Common myeloid progenitor, CD34-positive (primary cell): ENCODE measurements at regions of chr10 and their contacts with region 1.

Region 1: GRCh38 chr10:69515699-69516259 is 57.4 kb downstream of the NEUROG3 start:
- DNase-seq: peak; percentile 70 to 83 (median 77)
- H3K4me3 ChIP-seq: no peak overlapping the region
- H3K27ac ChIP-seq: no peak overlapping the region
- H3K4me1 ChIP-seq: no peaks in the 10 kb centered on the region
- H3K27me3 ChIP-seq: peaks cover 0 to 7% (median 0%) of the 10 kb centered on the region in 5 experiments

Region 2: DNA sequence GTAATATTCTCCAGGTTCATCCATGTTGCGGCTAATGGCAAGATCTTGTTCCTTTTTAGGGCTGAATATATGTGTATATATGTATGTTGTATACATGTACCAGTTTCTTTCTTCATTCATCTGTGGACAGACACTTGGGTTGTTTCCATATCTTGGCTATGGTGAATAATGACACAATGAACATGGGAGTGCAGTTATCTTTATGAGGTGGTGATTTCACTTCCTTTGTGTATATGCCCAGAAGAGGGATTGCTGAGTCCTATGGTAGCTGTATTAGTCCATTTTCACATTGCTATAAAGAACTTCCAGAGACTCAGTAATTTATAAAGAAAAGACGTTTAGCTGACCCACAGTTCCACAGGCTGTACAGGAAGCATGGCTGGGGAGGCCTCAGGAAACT is 81.6 kb before region 1 on chr10:
- CTCF ChIA-PET with region 1: interaction called, 15 read pairs
- POLR2A ChIA-PET with region 1: no interaction called
- DNase-seq: no peak
- H3K4me3 ChIP-seq: no peak overlapping the region
- H3K27ac ChIP-seq: no peak overlapping the region
- H3K4me1 ChIP-seq: peaks cover 0 to 8% (median 0%) of the 10 kb centered on the region in 4 experiments
- H3K27me3 ChIP-seq: no peaks in the 10 kb centered on the region

Region 3: DNA sequence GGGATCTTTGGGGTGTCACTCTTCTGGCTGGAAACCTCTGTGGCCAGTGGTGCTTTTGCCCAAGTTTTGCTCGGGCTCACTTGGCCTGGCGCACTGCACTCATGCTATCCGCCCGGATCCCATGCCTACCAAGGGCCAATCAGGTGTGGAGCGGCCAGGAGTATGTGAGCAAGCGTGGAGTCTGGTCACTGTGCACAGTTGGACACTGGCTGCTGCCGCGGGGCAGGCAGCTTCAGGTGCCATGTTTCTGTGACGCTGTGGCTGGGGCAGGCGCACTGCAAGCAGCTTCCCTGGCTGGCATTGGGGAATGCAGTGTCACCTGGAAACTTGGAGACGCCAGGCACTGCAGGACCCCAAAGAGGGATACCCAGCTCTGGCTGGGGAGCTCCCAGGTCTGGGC is 12.2 kb after region 1 on chr10:
- CTCF ChIA-PET with region 1: interaction called, 22 read pairs
- POLR2A ChIA-PET with region 1: no interaction called
- DNase-seq: no peak
- H3K4me3 ChIP-seq: no peak overlapping the region
- H3K27ac ChIP-seq: no peak overlapping the region
- H3K4me1 ChIP-seq: no peaks in the 10 kb centered on the region
- H3K27me3 ChIP-seq: peaks cover 0 to 3% (median 0%) of the 10 kb centered on the region in 5 experiments

Region 4: DNA sequence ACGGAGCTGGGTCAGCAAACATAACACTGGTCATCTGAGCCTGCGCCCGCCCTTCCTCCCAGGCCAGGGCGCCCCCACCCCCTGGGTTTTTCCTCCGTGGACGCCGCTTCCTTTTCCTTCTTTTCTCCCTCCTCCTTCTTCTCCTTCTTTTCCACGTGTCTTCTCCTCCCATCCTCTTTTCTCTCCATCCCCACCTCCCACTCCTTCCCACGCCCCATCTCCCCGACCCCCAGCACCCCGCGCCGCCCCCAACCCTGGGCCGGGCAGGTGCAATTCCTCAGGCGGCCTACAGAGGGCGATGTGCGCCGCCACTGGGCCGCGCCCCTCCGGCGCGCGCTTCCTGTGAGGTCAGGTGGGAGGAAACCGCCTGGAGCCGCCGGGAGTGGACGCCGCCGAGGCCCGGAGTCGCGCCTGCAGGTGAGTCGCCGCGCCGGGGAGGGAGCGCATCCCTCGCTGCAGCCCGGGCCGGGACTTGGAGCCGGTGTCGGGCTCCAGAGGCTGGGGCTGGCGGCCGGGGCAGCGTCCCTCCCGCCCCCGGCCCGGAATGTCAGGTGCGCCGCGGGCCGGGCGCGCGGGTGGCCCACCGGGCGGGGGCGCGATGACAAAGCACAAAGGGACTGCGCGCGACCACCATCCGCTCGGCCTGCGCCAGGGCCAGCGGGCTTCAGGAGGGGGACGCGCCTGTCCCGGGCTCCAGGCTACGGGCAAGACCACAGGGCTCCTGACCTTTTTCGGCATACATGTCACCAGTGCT is 114.3 kb after region 1 on chr10 and contains the start of gene FAM241B:
- CTCF ChIA-PET with region 1: interaction called, 294 read pairs
- POLR2A ChIA-PET with region 1: no interaction called
- DNase-seq: peak; percentile 40 to 74 (median 70)
- H3K4me3 ChIP-seq: peak within 1 kb of the TSS; percentile 36 to 75 (median 53)
- H3K27ac ChIP-seq: no peak within 1 kb of the TSS
- H3K4me1 ChIP-seq: peaks cover 0 to 13% (median 8%) of the 10 kb centered on the region in 4 experiments
- H3K27me3 ChIP-seq: peaks cover 0 to 32% (median 5%) of the 10 kb centered on the region in 5 experiments

Region 5: GRCh38 chr10:69639291-69640195 is 123.8 kb after region 1 on chr10:
- CTCF ChIA-PET with region 1: interaction called, 294 read pairs
- POLR2A ChIA-PET with region 1: interaction called, 5 read pairs
- DNase-seq: peak; percentile 74 to 87 (median 80)
- H3K4me3 ChIP-seq: no peak overlapping the region
- H3K27ac ChIP-seq: no peak overlapping the region
- H3K4me1 ChIP-seq: no peaks in the 10 kb centered on the region
- H3K27me3 ChIP-seq: peaks cover 0 to 14% (median 6%) of the 10 kb centered on the region in 5 experiments